Psoas muscle (tissue), 8 donors: ENCODE measurements at regions of chr6 and their contacts with region 1.

Region 1: DNA sequence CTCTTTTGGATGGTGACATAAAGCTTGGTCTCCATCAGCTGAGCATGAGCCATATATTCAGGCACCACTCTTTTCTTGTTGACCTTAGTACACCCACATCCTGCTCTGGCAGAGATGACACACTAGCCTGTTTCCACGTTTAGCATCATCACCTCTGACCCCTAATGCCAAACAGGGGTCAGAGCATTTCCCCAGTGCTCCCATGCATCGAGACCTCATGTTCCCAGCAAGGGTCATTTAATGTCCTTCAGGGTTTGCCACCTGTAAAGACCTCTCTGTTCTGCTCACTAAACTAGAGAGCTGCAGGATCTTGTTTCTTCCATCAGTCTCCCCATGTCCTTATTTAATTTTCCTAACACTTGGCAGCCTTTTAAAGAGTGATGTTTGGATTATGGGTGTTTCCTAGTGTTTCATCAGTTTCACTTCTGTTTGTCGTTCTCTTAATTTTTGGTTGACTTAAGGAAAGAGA is 97.5 kb downstream of the AIG1 start:
- DNase-seq: no peak
- ATAC-seq: no peak
- H3K4me3 ChIP-seq: no peak overlapping the region
- H3K27ac ChIP-seq: no peak overlapping the region
- H3K4me1 ChIP-seq: peaks cover 31% of the 10 kb centered on the region
- H3K27me3 ChIP-seq: no peaks in the 10 kb centered on the region
- CTCF ChIP-seq: no peak

Region 2: DNA sequence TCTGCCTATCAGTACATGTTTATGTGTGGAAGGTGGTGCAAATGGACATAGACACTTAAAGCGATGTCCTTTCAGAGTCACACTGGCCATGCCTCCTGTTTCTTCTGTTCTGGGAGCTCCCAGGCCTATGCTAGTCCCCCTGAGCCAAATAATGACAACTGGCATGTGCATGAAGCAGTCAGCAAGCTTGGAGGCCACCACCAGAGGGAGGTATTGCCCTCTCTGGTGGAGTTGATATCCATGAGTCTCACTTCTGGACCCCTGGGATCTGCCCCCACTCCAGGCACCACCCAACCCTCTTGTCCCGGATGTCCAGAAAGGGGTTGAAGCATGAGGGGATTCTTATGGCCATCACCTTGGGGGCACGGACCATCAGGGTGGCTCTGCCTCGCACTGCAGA is 74.7 kb after region 1 on chr6:
- intact Hi-C with region 1: loop called in 1 of 2 experiments (anchors 2 kb)
- DNase-seq: peak in 1 of 2 donors; percentile 17
- ATAC-seq: no peak
- H3K4me3 ChIP-seq: no peak overlapping the region
- H3K27ac ChIP-seq: no peak overlapping the region
- H3K4me1 ChIP-seq: peaks cover 4% of the 10 kb centered on the region
- H3K27me3 ChIP-seq: no peaks in the 10 kb centered on the region
- CTCF ChIP-seq: peak; percentile 20

Region 3: DNA sequence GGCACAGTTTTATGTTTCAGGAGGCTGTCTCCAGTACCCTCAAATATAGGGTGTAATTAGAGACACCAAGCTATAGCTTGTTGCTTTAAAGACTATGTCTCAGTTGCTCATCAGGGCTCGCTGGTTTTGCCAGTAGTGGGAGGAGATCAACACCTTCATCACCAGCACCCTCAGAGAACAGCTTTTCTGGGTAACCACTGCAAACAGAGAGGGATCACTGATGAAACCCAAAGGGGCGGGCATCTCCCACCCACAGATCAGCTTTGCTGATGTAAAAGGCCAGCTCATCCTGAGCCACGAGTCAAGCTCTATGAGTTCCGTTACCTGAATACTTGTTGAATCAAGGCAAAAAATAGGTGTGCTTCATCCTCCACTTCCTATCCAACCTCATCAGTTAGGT is 90.2 kb after region 1 on chr6:
- intact Hi-C with region 1: no loop called
- DNase-seq: no peak
- ATAC-seq: no peak
- H3K4me3 ChIP-seq: no peak overlapping the region
- H3K27ac ChIP-seq: no peak overlapping the region
- H3K4me1 ChIP-seq: no peaks in the 10 kb centered on the region
- H3K27me3 ChIP-seq: no peaks in the 10 kb centered on the region
- CTCF ChIP-seq: no peak